ENCODE measurements at regions of chr6 and their contacts with region 1.

Region 1: GRCh38 chr6:19268115-19268514 is 569.1 kb upstream of the ID4 start:
- DNase-seq: peak; percentile 40 to 95
- H3K4me3 ChIP-seq: no peak overlapping the region
- H3K27ac ChIP-seq: peak overlapping the region; percentile 51
- H3K4me1 ChIP-seq: peaks cover 30% of the 10 kb centered on the region
- H3K27me3 ChIP-seq: no peaks in the 10 kb centered on the region
- CTCF ChIP-seq: no peak

Region 2: DNA sequence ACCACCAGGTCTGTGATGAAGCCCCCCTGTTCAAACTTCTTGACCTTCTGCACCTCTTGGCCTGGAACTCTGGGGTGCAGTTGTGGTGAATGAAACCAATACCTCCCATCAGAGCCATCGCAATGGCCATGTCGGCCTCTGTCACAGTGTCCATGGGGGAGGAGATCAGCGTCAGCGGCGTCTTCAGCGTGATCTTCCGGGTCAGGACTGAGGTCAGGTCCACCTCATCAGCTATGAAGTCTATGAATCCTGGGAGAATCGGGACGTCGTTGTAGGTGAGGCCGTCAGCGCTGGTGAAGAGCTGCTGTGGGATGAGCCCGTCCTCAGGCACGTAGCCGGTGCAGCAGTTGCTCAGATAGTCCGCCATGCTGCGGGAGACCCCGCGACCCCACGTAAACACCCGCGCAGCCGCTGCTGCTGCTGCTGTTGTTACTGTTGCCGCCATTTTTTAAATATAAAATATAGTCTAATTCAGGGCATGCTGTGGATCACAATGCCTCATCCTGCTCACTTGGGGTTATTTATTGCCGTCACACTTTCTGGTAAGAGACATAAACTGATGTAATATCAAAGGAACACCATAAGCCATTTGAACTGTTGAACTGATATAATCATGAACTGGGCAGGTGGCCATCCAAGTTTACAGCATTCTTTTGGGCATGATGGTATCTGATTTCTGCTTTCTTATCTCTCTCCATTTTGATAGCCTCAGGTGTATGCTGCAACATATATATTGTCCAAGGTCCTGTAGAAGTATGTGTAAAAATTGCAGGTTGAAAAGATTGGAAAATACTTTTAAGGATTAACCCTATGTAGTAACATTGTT is 899.6 kb before region 1 on chr6:
- CTCF ChIA-PET with region 1: no interaction called
- POLR2A ChIA-PET with region 1: no interaction called
- intact Hi-C with region 1: no loop called
- DNase-seq: peak; percentile 37 to 85
- H3K4me3 ChIP-seq: no peak overlapping the region
- H3K27ac ChIP-seq: no peak overlapping the region
- H3K4me1 ChIP-seq: peaks cover 4% of the 10 kb centered on the region; the same call in 1 of the 2 replicates
- H3K27me3 ChIP-seq: no peaks in the 10 kb centered on the region
- CTCF ChIP-seq: no peak

Region 3: DNA sequence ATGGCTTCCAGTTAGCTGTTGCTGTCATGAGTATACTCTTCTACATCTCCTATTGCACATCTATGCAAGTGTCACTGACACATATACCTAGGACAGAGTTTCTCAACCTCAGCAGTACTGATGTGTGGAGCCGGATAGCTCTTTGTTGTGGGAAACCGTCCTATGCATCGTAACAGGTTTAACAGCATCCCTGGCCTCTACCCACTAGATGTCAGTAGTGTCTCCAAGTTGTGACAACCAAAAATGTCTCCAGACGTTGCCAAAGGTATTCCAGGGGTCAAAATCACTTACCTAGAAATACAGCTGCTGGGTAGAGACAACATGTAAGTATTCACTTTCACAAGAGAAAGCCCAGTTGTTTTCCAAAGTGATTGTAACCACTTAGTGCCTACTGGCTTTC is 243.4 kb before region 1 on chr6:
- CTCF ChIA-PET with region 1: no interaction called
- POLR2A ChIA-PET with region 1: no interaction called
- intact Hi-C with region 1: loop called (anchors 10 kb)
- DNase-seq: peak; percentile 43
- H3K4me3 ChIP-seq: no peak overlapping the region
- H3K27ac ChIP-seq: no peak overlapping the region
- H3K4me1 ChIP-seq: no peaks in the 10 kb centered on the region
- H3K27me3 ChIP-seq: no peaks in the 10 kb centered on the region
- CTCF ChIP-seq: peak; percentile 67

Region 4: DNA sequence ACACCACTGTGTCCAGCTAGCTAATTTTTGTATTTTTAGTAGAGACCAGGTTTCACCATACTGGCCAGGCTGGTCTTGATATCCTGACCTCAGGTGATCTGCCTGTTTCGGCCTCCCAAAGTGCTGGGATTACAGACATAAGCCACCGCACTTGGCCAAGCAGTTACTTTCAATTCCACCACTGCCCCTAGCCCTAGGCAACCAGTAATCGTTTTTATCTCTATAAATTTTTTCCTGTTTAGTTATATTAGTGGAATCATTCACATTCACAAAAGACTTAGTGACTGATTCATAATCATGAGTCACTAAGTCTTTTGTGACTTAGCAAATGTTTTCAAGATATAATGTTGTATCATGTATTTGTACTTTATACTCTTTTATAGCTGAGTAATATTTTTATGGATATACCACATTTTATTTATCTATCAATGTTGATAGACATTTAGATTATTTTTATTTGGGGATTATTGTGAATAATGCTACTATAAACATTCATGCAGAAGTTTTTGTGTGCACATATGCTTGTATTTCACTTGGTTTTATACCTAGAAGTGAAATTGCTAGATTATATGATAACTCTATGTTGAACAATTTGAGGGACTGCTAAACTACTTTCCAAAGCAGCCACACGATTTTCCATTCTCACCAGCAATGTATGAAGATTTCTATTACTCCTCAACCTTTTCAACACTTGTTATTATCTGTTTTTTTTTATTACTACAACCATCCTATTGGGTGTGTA is 147.6 kb after region 1 on chr6:
- CTCF ChIA-PET with region 1: no interaction called
- POLR2A ChIA-PET with region 1: no interaction called
- intact Hi-C with region 1: loop called (anchors 1 kb)
- DNase-seq: peak; percentile 60 to 94
- H3K4me3 ChIP-seq: peak overlapping the region; percentile 16; the same call in 1 of the 2 replicates
- H3K27ac ChIP-seq: peak overlapping the region; percentile 91
- H3K4me1 ChIP-seq: peaks cover 57% of the 10 kb centered on the region
- H3K27me3 ChIP-seq: no peaks in the 10 kb centered on the region
- CTCF ChIP-seq: no peak

Region 5: DNA sequence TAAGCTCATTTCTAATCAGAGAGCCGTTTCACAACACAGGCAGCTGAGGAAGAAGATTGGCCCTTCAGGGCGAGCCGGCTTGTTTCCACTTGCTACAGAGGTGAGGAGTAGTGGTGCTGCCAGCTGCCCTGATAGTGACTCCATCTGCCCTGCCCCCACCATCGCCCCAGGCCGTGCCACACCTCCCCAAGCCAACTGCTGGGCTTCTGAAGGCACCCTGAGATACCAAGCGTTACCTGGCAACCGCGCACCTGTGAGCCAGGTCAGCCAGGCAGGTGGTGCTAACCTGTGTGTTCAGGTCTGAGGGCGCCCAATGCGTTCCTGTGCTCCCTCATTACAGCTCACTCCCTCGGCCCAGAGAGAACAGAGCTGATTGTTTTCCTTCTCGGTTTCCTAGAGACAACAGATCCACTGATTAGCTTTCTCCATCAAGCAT is 270.0 kb after region 1 on chr6:
- CTCF ChIA-PET with region 1: no interaction called
- POLR2A ChIA-PET with region 1: no interaction called
- intact Hi-C with region 1: loop called (anchors 5 kb)
- DNase-seq: peak; percentile 96 to 99
- H3K4me3 ChIP-seq: no peak overlapping the region
- H3K27ac ChIP-seq: no peak overlapping the region
- H3K4me1 ChIP-seq: peaks cover 24% of the 10 kb centered on the region
- H3K27me3 ChIP-seq: no peaks in the 10 kb centered on the region
- CTCF ChIP-seq: no peak

Region 6: GRCh38 chr6:19892260-19892659 is 624.1 kb after region 1 on chr6:
- CTCF ChIA-PET with region 1: no interaction called
- POLR2A ChIA-PET with region 1: no interaction called
- intact Hi-C with region 1: loop called (anchors 1 kb)
- DNase-seq: peak; percentile 96 to 97
- H3K4me3 ChIP-seq: no peak overlapping the region
- H3K27ac ChIP-seq: peak overlapping the region; percentile 82
- H3K4me1 ChIP-seq: peaks cover 34% of the 10 kb centered on the region
- H3K27me3 ChIP-seq: no peaks in the 10 kb centered on the region
- CTCF ChIP-seq: no peak

Measured in PC-9 (cell line).